ENCODE measurements at regions of chr1 and their contacts with region 1.

Region 1: GRCh38 chr1:248858891-248859889 is at the start of gene ZNF692:
- DNase-seq: peak; percentile 97 to 98 (median 97)
- H3K4me3 ChIP-seq: peak within 1 kb of the TSS; percentile 66 to 81
- H3K4me3 Mint-ChIP-seq: peak within 1 kb of the TSS; percentile 84 to 93 (median 89)
- H3K27ac ChIP-seq: peak within 1 kb of the TSS; percentile 58
- H3K27ac Mint-ChIP-seq: peak within 1 kb of the TSS; percentile 88 to 98 (median 97)
- H3K4me1 ChIP-seq: peaks cover 58% of the 10 kb centered on the region
- H3K4me1 Mint-ChIP-seq: peaks cover 38 to 63% (median 45%) of the 10 kb centered on the region in 4 donors
- H3K27me3 ChIP-seq: no peaks in the 10 kb centered on the region
- H3K27me3 Mint-ChIP-seq: no peaks in the 10 kb centered on the region
- total RNA-seq, gene ZNF692: 70.8 to 74.8 TPM

Region 2: GRCh38 chr1:248686815-248687214 is 172.4 kb before region 1 on chr1:
- CTCF ChIA-PET with region 1: no interaction called
- POLR2A ChIA-PET with region 1: no interaction called
- intact Hi-C with region 1: no loop called
- DNase-seq: peak in 4 of 5 donors; percentile 19 to 41 (median 21)
- H3K4me3 ChIP-seq: no peak overlapping the region
- H3K4me3 Mint-ChIP-seq: no peak overlapping the region
- H3K27ac ChIP-seq: no peak overlapping the region
- H3K27ac Mint-ChIP-seq: peak overlapping the region in 1 of 7 donors; percentile 32
- H3K4me1 ChIP-seq: no peaks in the 10 kb centered on the region
- H3K4me1 Mint-ChIP-seq: peaks cover 0 to 4% (median 3%) of the 10 kb centered on the region in 4 donors
- H3K27me3 ChIP-seq: no peaks in the 10 kb centered on the region
- H3K27me3 Mint-ChIP-seq: peaks cover 4 to 6% of the 10 kb centered on the region in 2 donors

Region 3: DNA sequence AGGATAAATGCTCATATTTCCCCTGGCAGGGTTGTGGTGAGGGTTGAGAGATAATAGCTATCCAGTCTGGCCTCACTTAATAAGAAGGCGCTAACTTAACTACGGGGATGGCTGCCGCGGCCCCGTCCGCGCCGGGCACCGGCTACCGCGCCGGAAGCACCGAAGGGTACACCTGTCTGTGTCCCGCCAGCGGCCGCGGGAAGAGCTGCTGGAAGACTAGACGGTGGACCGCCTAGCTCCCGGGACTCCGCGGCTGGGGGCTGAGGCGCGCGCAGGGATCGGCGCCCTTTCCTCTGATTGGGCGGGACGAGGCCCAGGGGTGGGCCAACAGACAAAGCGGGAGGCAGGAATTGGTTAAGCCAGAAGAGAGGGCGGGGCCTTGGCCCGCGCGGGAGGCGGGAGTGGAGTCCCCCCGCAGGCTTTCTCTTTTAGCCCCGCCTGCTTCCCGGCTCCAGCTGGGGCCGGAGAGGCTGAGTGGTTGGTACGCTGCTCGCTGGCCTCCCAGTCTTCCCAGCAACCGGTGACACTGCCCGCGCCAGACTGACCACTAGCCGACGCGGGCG is 21.3 kb before region 1 on chr1 and contains the start of gene ZNF672:
- CTCF ChIA-PET with region 1: interaction called, 54 read pairs
- POLR2A ChIA-PET with region 1: interaction called, 210 read pairs
- intact Hi-C with region 1: loop called (anchors 1 kb)
- DNase-seq: peak; percentile 92 to 95 (median 93)
- H3K4me3 ChIP-seq: peak within 1 kb of the TSS; percentile 64 to 87
- H3K4me3 Mint-ChIP-seq: peak within 1 kb of the TSS in 2 of 8 donors; percentile 95 to 99
- H3K27ac ChIP-seq: peak within 1 kb of the TSS; percentile 97
- H3K27ac Mint-ChIP-seq: peak within 1 kb of the TSS in 6 of 7 donors; percentile 96 to 99 (median 99)
- H3K4me1 ChIP-seq: peaks cover 36% of the 10 kb centered on the region
- H3K4me1 Mint-ChIP-seq: peaks cover 13 to 36% (median 24%) of the 10 kb centered on the region in 4 donors
- H3K27me3 ChIP-seq: no peaks in the 10 kb centered on the region
- H3K27me3 Mint-ChIP-seq: peaks cover 3 to 4% of the 10 kb centered on the region in 2 donors
- total RNA-seq, gene ZNF672: 39.7 to 42.8 TPM